MCF 10A (cell line): ENCODE measurements at regions of chr12 and their contacts with region 1.

Region 1: GRCh38 chr12:130747867-130748740 is 32.0 kb upstream of the RIMBP2 start:
- DNase-seq: peak; percentile 73
- H3K4me3 Mint-ChIP-seq: no peak overlapping the region
- H3K27ac Mint-ChIP-seq: no peak overlapping the region
- H3K4me1 Mint-ChIP-seq: no peaks in the 10 kb centered on the region
- H3K27me3 Mint-ChIP-seq: peaks cover 22% of the 10 kb centered on the region
- CTCF ChIP-seq: peak; percentile 86

Region 2: GRCh38 chr12:130041983-130042812 is 705.9 kb before region 1 on chr12:
- CTCF ChIA-PET with region 1: interaction called, 34 read pairs
- POLR2A ChIA-PET with region 1: no interaction called
- intact Hi-C with region 1: loop called (anchors 2 kb)
- DNase-seq: peak; percentile 20
- H3K4me3 Mint-ChIP-seq: no peak overlapping the region
- H3K27ac Mint-ChIP-seq: no peak overlapping the region
- H3K4me1 Mint-ChIP-seq: no peaks in the 10 kb centered on the region
- H3K27me3 Mint-ChIP-seq: peaks cover 22% of the 10 kb centered on the region
- CTCF ChIP-seq: peak; percentile 63

Region 3: DNA sequence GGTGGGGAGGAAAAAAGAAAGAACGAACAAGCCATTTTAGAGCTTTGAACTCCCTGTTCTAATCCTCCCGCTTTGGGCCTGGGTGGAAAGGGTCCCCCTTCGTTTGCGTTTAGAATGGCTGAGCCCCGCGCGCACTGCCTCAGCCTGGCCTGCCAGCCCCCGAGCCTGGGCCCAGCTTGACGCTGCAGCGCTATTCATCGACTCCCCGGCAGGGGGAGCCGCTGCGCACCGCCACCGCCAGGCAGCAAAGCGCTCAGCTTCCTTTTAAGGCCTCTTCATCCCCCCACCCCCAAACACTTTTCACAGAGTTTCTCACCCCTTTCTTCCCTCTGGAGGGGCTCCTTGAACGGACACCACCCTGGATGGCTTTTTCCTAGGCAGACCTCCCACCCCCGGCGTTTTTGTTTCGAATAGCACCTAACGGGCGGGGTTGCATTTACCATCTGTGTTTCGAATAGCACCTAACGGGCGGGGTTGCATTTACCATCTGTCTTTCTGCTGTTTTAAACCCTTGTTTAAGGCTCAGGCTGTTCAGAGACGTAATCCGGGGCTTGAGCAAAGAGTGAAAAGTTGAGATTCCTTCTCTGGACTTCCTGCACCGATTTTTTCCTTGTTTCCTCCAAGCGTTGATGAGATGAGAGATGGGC is 466.8 kb before region 1 on chr12:
- CTCF ChIA-PET with region 1: no interaction called
- POLR2A ChIA-PET with region 1: no interaction called
- intact Hi-C with region 1: loop called (anchors 5 kb)
- DNase-seq: peak; percentile 8
- H3K4me3 Mint-ChIP-seq: no peak overlapping the region
- H3K27ac Mint-ChIP-seq: no peak overlapping the region
- H3K4me1 Mint-ChIP-seq: no peaks in the 10 kb centered on the region
- H3K27me3 Mint-ChIP-seq: no peaks in the 10 kb centered on the region
- CTCF ChIP-seq: peak; percentile 65

Region 4: DNA sequence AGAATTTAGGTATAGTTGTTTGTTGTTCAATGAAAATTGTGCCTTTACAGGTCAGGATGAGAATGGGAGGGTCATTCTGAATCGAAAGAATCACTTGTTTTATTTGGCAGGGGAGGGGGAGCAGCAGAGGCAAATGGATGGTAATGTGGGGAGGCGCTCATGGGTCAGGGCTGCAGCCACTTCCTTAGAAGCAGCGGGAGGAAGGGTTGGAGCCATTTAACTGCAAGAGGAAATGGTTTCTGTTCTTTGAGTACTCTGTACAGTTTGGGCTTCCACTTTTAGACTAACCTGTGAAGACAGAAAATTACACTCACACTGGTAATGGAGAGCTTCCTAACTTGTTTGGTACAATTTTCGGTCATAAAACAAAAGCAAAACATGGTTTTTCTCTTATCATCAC is 353.2 kb before region 1 on chr12:
- CTCF ChIA-PET with region 1: interaction called, 21 read pairs
- POLR2A ChIA-PET with region 1: no interaction called
- intact Hi-C with region 1: no loop called
- DNase-seq: no peak
- H3K4me3 Mint-ChIP-seq: no peak overlapping the region
- H3K27ac Mint-ChIP-seq: no peak overlapping the region
- H3K4me1 Mint-ChIP-seq: peaks cover 8% of the 10 kb centered on the region
- H3K27me3 Mint-ChIP-seq: no peaks in the 10 kb centered on the region
- CTCF ChIP-seq: no peak